ENCODE measurements at regions of chr14 and their contacts with region 1.

Region 1: DNA sequence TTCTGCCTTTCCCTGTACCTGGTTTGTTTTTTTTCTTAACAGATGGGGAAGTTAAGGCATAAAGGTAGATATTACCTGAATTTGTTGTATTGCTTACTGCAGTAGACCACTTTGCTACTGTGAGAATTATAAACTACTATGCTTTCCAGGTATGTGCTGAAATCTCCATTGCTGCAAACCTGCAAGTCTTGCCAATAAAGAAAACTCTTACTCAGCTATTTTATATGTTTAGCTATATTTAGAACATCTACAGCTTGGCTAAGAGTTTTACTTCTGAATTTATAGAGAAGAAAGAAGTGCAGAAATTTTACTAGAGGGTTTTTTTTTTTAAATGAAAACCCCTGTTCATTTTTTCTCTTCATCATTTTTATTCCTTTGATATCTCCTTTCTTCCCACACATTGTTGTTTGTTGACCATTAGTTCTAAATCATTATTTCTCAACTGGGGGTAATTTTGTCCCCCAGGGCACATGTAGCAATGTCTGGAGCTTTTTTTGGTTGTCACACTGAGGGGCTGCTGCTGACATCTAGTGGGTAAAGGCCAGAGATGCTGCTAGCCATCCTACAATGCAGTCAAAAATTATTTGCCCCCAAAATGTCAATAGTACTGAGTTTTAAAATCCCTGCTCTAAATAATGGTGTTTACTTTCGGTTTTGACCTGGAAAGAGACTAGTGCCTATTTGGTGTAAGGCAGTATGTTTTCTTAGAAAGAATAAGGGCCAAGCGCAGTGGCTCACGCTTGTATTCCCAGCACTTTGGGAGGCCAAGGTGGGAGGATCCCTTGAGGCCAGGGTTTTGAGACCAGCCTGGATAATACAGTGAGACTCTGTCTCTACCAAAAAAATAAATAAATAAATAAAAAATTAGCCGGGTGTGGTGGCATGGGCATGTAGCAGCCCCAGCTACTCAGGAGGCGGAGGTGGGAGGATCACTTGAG is 48.6 kb downstream of the PCNX1 start:
- DNase-seq: no peak
- ATAC-seq: peak in 6 of 8 donors; percentile 46 to 66 (median 62)
- H3K4me3 ChIP-seq: no peak overlapping the region
- H3K27ac ChIP-seq: no peak overlapping the region
- H3K4me1 ChIP-seq: peaks cover 0 to 52% (median 39%) of the 10 kb centered on the region in 9 donors
- H3K27me3 ChIP-seq: no peaks in the 10 kb centered on the region
- CTCF ChIP-seq: peak in 8 of 9 donors; percentile 19 to 72 (median 56)

Region 2: GRCh38 chr14:70873627-70874026 is 82.2 kb before region 1 on chr14:
- intact Hi-C with region 1: no loop called
- DNase-seq: no peak
- ATAC-seq: no peak
- H3K4me3 ChIP-seq: no peak overlapping the region
- H3K27ac ChIP-seq: no peak overlapping the region
- H3K4me1 ChIP-seq: peaks cover 0 to 3% (median 0%) of the 10 kb centered on the region in 9 donors
- H3K27me3 ChIP-seq: no peaks in the 10 kb centered on the region
- CTCF ChIP-seq: peak in 3 of 9 donors; percentile 4 to 30 (median 18)

Region 3: DNA sequence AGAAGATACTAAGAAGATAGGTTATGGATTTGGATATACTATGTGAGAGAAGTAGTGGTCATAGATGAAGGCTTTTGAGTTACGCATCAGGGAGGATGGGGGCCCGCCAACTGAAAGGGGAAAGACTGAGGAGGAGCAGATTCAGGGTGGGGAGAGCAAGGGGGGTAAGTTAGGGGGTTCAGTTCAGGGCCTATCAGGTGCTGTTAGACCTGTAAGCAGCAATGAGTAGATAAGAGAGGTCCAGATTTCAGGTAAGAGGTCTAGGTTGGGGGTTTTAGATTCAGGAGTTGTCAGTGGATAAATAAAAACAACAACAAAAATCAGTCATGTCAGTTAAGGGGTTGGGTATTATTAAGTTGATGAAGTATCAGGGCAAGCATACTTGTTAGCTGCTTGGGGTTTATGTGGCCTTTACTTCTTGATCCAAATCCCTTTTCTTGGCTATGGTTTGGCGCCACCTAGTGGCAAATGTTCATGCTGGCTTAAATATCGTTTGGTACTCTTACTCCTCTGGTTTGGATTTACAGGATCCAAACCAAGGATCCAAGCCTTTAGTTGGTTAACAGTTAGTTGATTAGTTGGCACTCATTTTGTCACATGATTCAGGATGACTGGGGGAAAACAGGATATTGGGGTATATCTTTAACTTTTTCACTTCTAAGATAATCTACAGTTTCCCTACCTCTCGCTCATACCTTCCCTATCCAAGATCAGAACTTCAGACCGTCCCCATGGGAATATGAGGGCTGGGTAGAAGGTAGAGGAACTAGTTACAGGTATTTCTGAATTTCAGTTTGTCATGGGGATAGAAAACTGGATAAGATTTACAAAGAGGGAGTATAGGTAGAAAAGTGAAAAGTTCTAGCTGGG is 16.5 kb after region 1 on chr14:
- intact Hi-C with region 1: no loop called
- DNase-seq: peak; percentile 55 to 86
- ATAC-seq: peak; percentile 71 to 94 (median 88)
- H3K4me3 ChIP-seq: no peak overlapping the region
- H3K27ac ChIP-seq: peak overlapping the region in 1 of 10 donors; percentile 42
- H3K4me1 ChIP-seq: peaks cover 0 to 25% (median 10%) of the 10 kb centered on the region in 9 donors
- H3K27me3 ChIP-seq: no peaks in the 10 kb centered on the region
- CTCF ChIP-seq: peak; percentile 87 to 97 (median 94)

Region 4: DNA sequence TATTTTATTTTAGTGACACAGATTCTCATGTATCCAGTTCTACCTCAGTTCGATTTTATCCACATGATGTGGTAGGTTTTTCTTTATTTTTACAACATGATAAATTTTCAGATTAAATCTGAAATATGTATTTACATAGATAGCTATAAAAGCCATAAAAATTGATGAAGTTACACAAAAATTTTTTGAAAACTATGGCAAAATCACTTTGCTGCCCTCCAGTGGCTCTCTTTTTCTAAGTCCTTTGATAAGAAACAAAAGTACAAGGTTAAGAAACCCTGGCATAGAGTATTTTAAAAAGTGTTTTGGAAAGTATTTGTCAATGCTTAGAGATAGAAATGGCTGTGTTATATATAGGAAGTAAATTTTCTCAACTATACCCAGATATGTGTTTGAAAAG is 55.7 kb after region 1 on chr14:
- intact Hi-C with region 1: loop called in 1 of 10 experiments (anchors 2 kb)
- DNase-seq: no peak
- ATAC-seq: peak in 1 of 8 donors; percentile 33
- H3K4me3 ChIP-seq: no peak overlapping the region
- H3K27ac ChIP-seq: peak overlapping the region in 1 of 10 donors; percentile 16
- H3K4me1 ChIP-seq: peaks cover 0 to 25% (median 7%) of the 10 kb centered on the region in 9 donors
- H3K27me3 ChIP-seq: no peaks in the 10 kb centered on the region
- CTCF ChIP-seq: peak in 6 of 9 donors; percentile 14 to 41 (median 34)